HepG2 (cell line): ENCODE measurements at regions of chr6 and their contacts with region 1.

Region 1: GRCh38 chr6:149028767-149029405 is 282.1 kb downstream of the UST start:
- DNase-seq: peak; percentile 96
- ATAC-seq: peak; percentile 31
- H3K4me3 ChIP-seq: no peak overlapping the region
- H3K27ac ChIP-seq: no peak overlapping the region
- H3K4me1 ChIP-seq: peaks cover 47% of the 10 kb centered on the region
- H3K27me3 ChIP-seq: 0 out of 5 replicates have a peak, but pooled peaks cover 0 to 3% of the 10 kb centered on the region in 2 experiments
- CTCF ChIP-seq: peak; percentile 92
- EP300 ChIP-seq: peak in 1 of 2 experiments; percentile 53; a peak in 1 of 4 replicates
- POLR2A ChIP-seq: no peak
- RAD21 ChIP-seq: peak; percentile 91

Region 2: GRCh38 chr6:149075616-149076364 is 46.9 kb after region 1 on chr6:
- CTCF ChIA-PET with region 1: no interaction called
- POLR2A ChIA-PET with region 1: interaction called, 8 read pairs
- in situ Hi-C with region 1: loop called (anchors 5 kb)
- intact Hi-C with region 1: loop called (anchors 1 kb)
- DNase-seq: no peak
- ATAC-seq: no peak
- H3K4me3 ChIP-seq: no peak overlapping the region
- H3K27ac ChIP-seq: peak overlapping the region; percentile 50
- H3K4me1 ChIP-seq: peaks cover 57% of the 10 kb centered on the region
- H3K27me3 ChIP-seq: no peaks in the 10 kb centered on the region
- CTCF ChIP-seq: no peak
- EP300 ChIP-seq: no peak
- POLR2A ChIP-seq: no peak
- RAD21 ChIP-seq: no peak

Region 3: DNA sequence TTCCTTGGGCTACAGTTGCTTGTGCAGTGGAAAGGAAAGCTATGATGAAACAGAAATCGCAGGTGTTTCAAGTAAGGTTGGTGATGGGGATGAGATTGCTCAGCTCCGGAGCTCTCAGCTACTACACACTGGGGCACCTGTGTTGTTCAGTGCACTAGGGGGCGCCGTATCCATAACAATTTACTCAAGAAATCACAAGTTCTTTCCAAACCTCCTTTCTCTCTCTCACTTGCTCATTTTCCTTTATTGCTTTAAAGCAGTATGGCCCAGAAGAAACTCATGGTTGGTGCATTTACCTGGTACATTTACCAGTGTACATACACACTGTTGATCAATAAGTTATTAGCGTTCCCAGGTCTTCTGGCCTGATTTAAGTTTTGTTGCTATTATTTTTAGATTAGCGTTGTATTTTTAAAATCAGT is 53.4 kb after region 1 on chr6:
- CTCF ChIA-PET with region 1: interaction called, 9 read pairs
- POLR2A ChIA-PET with region 1: no interaction called
- in situ Hi-C with region 1: loop called (anchors 5 kb)
- intact Hi-C with region 1: loop called (anchors 2 kb)
- DNase-seq: peak; percentile 62
- ATAC-seq: peak; percentile 97
- H3K4me3 ChIP-seq: no peak overlapping the region
- H3K27ac ChIP-seq: no peak overlapping the region
- H3K4me1 ChIP-seq: peaks cover 23% of the 10 kb centered on the region
- H3K27me3 ChIP-seq: peaks cover 0 to 4% of the 10 kb centered on the region in 2 experiments; a peak in 1 of 5 replicates
- CTCF ChIP-seq: peak; percentile 90
- EP300 ChIP-seq: no peak
- POLR2A ChIP-seq: no peak
- RAD21 ChIP-seq: peak; percentile 91

Region 4: DNA sequence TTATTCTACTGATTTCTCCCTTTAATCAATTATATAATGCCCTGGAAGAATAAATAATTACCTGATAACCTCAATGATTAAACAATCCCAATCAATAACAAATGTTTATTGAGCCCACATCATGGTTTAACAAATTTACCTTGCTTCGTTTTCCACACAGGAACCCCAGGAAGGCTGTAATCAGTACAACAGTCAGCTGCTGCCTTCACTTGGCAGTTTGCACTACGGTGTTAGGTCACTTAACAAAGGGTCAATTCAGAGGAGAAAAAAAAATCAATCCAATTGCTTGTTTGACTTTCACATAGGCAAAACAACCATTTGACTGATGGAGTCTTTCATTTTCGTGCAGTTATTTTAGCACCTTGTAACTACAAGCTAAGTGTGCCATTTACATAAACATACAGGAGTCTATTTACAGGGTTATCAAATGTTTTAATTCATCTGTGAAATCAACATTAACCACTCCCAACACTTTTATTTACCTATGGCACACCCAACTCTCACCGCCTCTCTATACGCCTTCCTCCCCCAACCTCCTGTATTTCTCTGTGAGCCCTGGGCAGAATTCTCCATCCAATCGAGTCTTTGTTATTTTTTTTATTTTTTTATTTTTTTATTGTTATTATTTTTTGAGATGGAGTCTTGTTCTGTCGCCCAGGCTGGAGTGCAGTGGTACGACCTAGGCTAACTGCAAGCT is 148.2 kb after region 1 on chr6:
- CTCF ChIA-PET with region 1: no interaction called
- POLR2A ChIA-PET with region 1: no interaction called
- in situ Hi-C with region 1: no loop called
- intact Hi-C with region 1: loop called (anchors 1 kb)
- DNase-seq: peak; percentile 84
- ATAC-seq: peak; percentile 98
- H3K4me3 ChIP-seq: no peak overlapping the region
- H3K27ac ChIP-seq: no peak overlapping the region
- H3K4me1 ChIP-seq: peaks cover 12% of the 10 kb centered on the region
- H3K27me3 ChIP-seq: peaks cover 0 to 55% of the 10 kb centered on the region in 2 experiments; a peak in 3 of 5 replicates
- CTCF ChIP-seq: no peak
- EP300 ChIP-seq: peak in 1 of 2 experiments; percentile 71; a peak in 2 of 4 replicates
- POLR2A ChIP-seq: no peak
- RAD21 ChIP-seq: no peak

Region 5: DNA sequence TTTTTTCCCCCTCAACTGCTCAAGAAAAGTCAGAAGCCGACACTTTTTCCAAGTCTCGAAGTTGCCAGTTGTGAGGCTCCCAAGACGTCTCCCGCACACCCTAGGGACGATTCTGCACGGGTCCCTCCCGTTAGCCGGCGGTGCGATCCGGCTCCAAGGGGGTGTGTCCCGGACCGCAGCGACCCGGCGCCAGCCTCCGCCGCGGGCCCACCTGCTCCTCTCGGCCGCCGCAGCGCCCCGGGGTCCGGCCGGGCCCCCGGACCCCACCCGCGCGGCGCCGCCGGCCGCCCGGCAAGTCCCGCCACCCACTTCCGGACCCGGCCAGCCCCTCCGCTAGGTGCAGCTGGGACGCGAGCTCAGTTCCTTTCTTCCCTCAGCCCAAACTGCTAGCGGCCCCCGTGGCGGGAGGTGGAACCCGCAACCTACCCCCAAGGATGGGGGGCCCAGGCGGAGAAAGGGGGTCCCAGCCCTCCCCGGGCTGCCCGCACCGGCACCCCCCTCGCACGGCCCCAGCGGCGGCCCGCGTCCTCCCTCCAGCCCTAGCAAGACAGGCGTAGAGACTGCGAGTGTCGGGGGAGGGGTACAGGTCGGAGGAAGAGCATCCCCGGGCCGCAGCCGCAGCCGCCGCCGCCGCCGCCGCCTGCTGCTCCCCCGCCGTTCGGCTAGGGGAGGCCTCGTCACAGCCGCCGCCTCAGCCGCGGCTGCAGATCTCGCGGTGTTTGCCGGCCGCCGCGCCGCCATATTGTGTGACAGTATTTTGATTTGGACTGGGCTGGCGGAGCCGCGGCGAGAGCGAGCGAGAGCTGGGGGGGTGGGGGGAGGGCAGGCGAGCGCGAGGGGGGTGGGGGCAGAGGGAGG is 288.1 kb after region 1 on chr6:
- CTCF ChIA-PET with region 1: no interaction called
- POLR2A ChIA-PET with region 1: no interaction called
- in situ Hi-C with region 1: loop called (anchors 10 kb)
- intact Hi-C with region 1: no loop called
- DNase-seq: peak; percentile 89
- ATAC-seq: peak; percentile 90
- H3K4me3 ChIP-seq: peak overlapping the region; percentile 97 to 99 (median 97)
- H3K27ac ChIP-seq: peak overlapping the region; percentile 92
- H3K4me1 ChIP-seq: peaks cover 25% of the 10 kb centered on the region
- H3K27me3 ChIP-seq: peaks cover 2 to 3% of the 10 kb centered on the region in 2 experiments; a peak in 2 of 5 replicates
- CTCF ChIP-seq: peak; percentile 26
- EP300 ChIP-seq: peak in 1 of 2 experiments; percentile 38; a peak in 1 of 4 replicates
- POLR2A ChIP-seq: peak; percentile 30 to 78; a peak in 3 of 4 replicates
- RAD21 ChIP-seq: peak; percentile 68

Region 6: DNA sequence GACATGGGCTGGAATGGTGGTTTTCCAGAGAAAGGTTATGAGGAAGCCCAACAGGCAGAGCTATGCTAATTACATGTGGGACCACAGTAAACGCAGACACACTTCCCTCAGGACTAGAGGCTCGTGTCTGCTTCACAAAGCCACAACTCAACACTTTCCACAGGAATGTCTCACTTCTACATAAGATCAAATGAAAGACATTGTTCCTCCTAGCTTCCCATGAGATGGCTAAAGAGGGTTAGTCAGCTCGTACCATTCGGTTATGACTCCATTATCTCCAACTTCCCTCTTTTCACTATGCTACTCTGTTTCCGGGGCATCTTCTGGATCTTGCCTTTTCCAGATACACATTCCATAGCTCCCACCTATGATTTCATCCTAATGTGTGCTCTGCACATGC is 485.0 kb after region 1 on chr6:
- CTCF ChIA-PET with region 1: interaction called, 16 read pairs
- POLR2A ChIA-PET with region 1: no interaction called
- in situ Hi-C with region 1: no loop called
- intact Hi-C with region 1: loop called (anchors 1 kb)
- DNase-seq: no peak
- ATAC-seq: no peak
- H3K4me3 ChIP-seq: no peak overlapping the region
- H3K27ac ChIP-seq: no peak overlapping the region
- H3K4me1 ChIP-seq: peaks cover 18% of the 10 kb centered on the region
- H3K27me3 ChIP-seq: no peaks in the 10 kb centered on the region
- CTCF ChIP-seq: no peak
- EP300 ChIP-seq: no peak
- POLR2A ChIP-seq: no peak
- RAD21 ChIP-seq: no peak

Region 7: GRCh38 chr6:149648148-149649145 is 619.6 kb after region 1 on chr6 and contains the start of gene KATNA1:
- CTCF ChIA-PET with region 1: no interaction called
- POLR2A ChIA-PET with region 1: no interaction called
- in situ Hi-C with region 1: no loop called
- intact Hi-C with region 1: no loop called
- DNase-seq: peak; percentile 96
- ATAC-seq: peak; percentile 98
- H3K4me3 ChIP-seq: peak within 1 kb of the TSS; percentile 74 to 85 (median 84)
- H3K27ac ChIP-seq: peak within 1 kb of the TSS; percentile 78
- H3K4me1 ChIP-seq: peaks cover 25% of the 10 kb centered on the region
- H3K27me3 ChIP-seq: no peaks in the 10 kb centered on the region; a peak in 1 of 5 replicates
- CTCF ChIP-seq: peak; percentile 68
- EP300 ChIP-seq: peak in 1 of 2 experiments; percentile 41; a peak in 1 of 4 replicates
- POLR2A ChIP-seq: peak; percentile 94 to 96
- RAD21 ChIP-seq: peak; percentile 71
- total RNA-seq, gene KATNA1: 25.3 and 31.2 TPM in 2 replicates